SK-N-SH (cell line): ENCODE measurements at regions of chr9 and their contacts with region 1.

Region 1: GRCh38 chr9:133459476-133460404 is at the start of gene CACFD1:
- DNase-seq: peak; percentile 98
- H3K4me3 ChIP-seq: peak within 1 kb of the TSS; percentile 78 to 85
- H3K27ac ChIP-seq: peak within 1 kb of the TSS; percentile 86 to 99
- H3K4me1 ChIP-seq: peaks cover 0 to 25% of the 10 kb centered on the region in 2 experiments; a peak in 1 of 4 replicates
- H3K27me3 ChIP-seq: no peaks in the 10 kb centered on the region
- CTCF ChIP-seq: no peak
- EP300 ChIP-seq: no peak
- RAD21 ChIP-seq: no peak
- polyA plus RNA-seq, gene CACFD1: 15.2 and 16.8 TPM in 2 replicates

Region 2: DNA sequence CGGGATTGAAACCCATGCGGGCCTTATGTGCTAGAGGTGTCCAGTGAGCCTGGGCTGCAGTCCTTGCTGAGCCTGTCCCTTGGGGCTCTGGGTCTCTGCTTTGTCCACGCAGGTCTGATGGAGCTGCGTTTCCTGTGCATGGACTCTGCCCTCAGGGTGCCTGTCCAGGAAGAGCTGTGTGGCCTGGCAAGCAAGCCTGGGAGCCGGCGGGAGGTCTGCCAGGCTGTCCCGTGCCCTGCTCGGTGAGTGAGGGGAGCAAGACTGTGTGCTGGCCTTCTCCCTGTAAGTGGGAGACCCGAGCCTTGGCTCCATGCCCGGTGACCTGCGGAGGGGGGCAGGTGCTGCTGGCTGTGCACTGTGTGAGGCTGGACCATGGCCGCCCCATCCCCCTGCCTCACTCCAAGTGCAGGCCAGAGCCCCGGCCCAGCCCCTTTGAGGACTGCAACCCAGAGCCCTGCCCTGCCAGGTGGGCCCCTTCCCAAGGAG is 11.2 kb before region 1 on chr9:
- CTCF ChIA-PET with region 1: interaction called, 8 read pairs
- POLR2A ChIA-PET with region 1: interaction called, 15 read pairs
- DNase-seq: peak; percentile 95
- H3K4me3 ChIP-seq: no peak overlapping the region
- H3K27ac ChIP-seq: peak overlapping the region in 1 of 2 experiments; percentile 92; a peak in 2 of 4 replicates
- H3K4me1 ChIP-seq: peaks cover 0 to 11% of the 10 kb centered on the region in 2 experiments; a peak in 2 of 4 replicates
- H3K27me3 ChIP-seq: no peaks in the 10 kb centered on the region
- CTCF ChIP-seq: no peak
- EP300 ChIP-seq: peak in 1 of 2 experiments; percentile 62; a peak in 1 of 4 replicates
- RAD21 ChIP-seq: no peak

Region 3: DNA sequence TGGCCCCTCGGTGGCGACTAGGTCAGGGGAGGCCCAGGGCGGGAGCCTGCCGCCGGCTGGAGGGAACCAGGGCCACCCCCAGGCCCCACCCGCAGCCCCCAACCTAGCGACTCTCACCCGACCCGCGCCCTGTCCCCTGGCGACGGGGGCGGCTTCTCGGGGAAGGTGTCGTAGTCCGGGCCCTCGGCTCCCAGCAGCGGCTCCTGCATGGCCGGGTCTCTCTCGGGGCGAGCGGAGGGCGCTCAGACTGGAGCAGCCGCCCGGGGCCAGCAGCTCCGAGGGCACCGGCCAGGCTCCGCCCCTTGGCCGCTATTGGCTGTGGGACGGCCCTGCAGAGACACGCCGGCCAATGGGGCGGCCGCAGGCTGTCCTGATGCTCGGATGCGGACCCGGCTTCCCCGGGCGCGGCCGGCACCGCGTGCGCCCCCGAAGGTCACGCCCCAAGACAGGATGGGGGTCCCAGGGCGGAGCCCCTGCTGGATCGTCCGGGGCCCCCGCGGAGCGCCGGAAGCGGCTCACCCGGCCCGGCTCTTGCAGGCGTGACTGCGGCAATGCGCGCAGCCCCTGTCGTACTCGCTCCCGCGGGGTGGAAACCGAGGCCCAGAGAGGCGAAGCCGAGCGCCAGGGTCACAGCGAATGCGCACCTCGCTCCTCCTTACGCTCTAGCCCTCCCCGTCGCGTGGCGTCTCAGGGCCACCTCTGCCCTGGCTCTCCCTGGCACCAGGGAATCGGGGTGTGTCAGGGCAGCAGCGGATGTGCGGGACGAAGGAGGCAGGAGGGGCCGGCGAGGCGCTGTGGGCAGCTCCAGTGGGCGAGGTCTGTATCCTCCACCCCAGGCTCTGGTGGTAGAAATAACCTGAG is 19.3 kb after region 1 on chr9 and contains the start of gene SLC2A6:
- CTCF ChIA-PET with region 1: interaction called, 4 read pairs
- POLR2A ChIA-PET with region 1: interaction called, 15 read pairs
- DNase-seq: peak; percentile 98
- H3K4me3 ChIP-seq: peak within 1 kb of the TSS; percentile 66 to 84
- H3K27ac ChIP-seq: peak within 1 kb of the TSS in 1 of 2 experiments; percentile 79; a peak in 2 of 4 replicates
- H3K4me1 ChIP-seq: peaks cover 0 to 28% of the 10 kb centered on the region in 2 experiments; a peak in 1 of 4 replicates
- H3K27me3 ChIP-seq: no peaks in the 10 kb centered on the region
- CTCF ChIP-seq: no peak
- EP300 ChIP-seq: no peak
- RAD21 ChIP-seq: no peak
- polyA plus RNA-seq, gene SLC2A6: 5.2 and 7.7 TPM in 2 replicates

Region 4: DNA sequence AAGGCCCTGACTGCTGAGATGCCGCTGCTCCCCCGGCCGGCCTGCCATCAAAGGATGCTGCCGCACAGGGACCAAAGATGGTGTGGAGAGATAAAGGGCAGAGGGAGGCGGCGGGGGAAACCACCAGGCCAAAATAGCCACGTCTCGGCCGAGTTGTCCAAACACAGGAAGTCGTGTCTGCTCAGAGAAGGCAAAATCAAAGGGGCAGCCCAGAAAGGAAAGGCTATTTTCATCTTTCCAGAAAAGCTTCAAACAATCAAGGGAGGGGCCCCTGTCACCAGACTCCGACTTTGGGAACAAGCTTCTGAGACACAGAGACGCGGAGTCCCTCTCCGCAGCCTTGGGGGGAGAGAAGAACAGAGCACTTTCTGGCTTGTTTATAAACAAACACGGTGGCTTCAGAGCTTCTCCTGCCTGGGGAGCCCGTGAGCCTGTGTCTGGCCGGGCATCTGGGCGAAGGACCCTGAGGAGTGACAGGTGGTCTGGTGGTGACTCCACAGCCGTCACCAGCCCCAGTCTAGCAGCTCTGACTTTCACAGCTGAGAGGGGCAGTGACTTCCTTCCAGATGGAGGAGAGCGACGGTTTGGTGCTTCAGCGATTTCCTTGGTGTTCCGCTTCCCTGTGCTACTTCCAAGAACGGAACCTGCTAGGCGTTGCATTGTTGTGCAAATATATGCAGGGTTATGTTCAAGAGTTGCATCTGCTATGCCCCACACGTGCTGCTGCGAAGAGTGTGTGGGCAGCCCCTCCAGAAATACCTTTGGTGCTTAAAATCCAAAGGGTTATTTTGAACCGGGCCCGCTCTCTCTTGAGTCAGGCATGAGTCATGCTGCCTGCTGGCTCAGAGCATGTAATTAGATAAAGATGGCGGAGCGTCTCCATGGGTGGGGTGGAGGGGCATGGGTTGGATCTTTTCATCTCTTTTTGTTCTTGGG is 98.7 kb after region 1 on chr9:
- CTCF ChIA-PET with region 1: no interaction called
- POLR2A ChIA-PET with region 1: no interaction called
- DNase-seq: peak; percentile 91
- H3K4me3 ChIP-seq: 0 out of 4 replicates have a peak overlapping the region, but pooled peaks of 1 of the 2 experiments have one; percentile 17
- H3K27ac ChIP-seq: peak overlapping the region; percentile 76 to 96
- H3K4me1 ChIP-seq: peaks cover 16 to 62% of the 10 kb centered on the region in 2 experiments
- H3K27me3 ChIP-seq: no peaks in the 10 kb centered on the region
- CTCF ChIP-seq: no peak
- EP300 ChIP-seq: peak in 1 of 2 experiments; percentile 17; a peak in 2 of 4 replicates
- RAD21 ChIP-seq: peak; percentile 10; the same call in 1 of the 2 replicates